ENCODE measurements at regions of chr2 and their contacts with region 1.

Region 1: GRCh38 chr2:182186132-182186735 is 200.6 kb downstream of the PPP1R1C start:
- DNase-seq: no peak
- ATAC-seq: peak; percentile 64
- H3K4me3 ChIP-seq: no peak overlapping the region
- H3K27ac ChIP-seq: no peak overlapping the region
- H3K4me1 ChIP-seq: no peaks in the 10 kb centered on the region
- H3K27me3 ChIP-seq: no peaks in the 10 kb centered on the region
- CTCF ChIP-seq: peak; percentile 89

Region 2: GRCh38 chr2:182463760-182464159 is 277.5 kb after region 1 on chr2:
- intact Hi-C with region 1: no loop called
- DNase-seq: no peak
- ATAC-seq: no peak
- H3K4me3 ChIP-seq: no peak overlapping the region
- H3K27ac ChIP-seq: no peak overlapping the region
- H3K4me1 ChIP-seq: no peaks in the 10 kb centered on the region
- H3K27me3 ChIP-seq: no peaks in the 10 kb centered on the region
- CTCF ChIP-seq: no peak

Region 3: GRCh38 chr2:182650704-182651103 is 464.5 kb after region 1 on chr2:
- intact Hi-C with region 1: loop called (anchors 5 kb)
- DNase-seq: no peak
- ATAC-seq: peak; percentile 48
- H3K4me3 ChIP-seq: no peak overlapping the region
- H3K27ac ChIP-seq: no peak overlapping the region
- H3K4me1 ChIP-seq: no peaks in the 10 kb centered on the region
- H3K27me3 ChIP-seq: no peaks in the 10 kb centered on the region
- CTCF ChIP-seq: peak; percentile 60

Region 4: DNA sequence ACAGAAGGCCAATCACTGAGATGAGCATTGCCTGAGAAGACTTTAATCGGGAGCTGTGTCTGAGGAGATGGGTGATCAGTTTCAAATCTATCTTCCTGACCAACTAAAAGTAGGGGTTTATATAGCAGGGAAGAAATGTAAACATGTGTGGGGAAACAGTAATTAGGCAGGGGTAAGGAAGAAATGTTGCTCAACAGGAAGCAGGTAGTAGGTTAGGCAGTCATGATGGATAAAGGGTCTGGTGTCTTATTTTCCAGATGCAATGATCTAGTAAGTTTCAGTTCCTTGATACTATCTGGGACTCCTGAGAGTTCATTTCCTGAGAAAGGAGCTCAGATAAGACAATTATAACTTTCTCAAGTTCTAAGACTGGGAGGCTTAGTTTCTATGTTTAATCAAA is 496.0 kb after region 1 on chr2:
- intact Hi-C with region 1: no loop called
- DNase-seq: no peak
- ATAC-seq: no peak
- H3K4me3 ChIP-seq: no peak overlapping the region
- H3K27ac ChIP-seq: no peak overlapping the region
- H3K4me1 ChIP-seq: no peaks in the 10 kb centered on the region
- H3K27me3 ChIP-seq: no peaks in the 10 kb centered on the region
- CTCF ChIP-seq: no peak

Measured in upper lobe of right lung (tissue), 1 donor.